ENCODE measurements at regions of chr2 and their contacts with region 1.

Region 1: DNA sequence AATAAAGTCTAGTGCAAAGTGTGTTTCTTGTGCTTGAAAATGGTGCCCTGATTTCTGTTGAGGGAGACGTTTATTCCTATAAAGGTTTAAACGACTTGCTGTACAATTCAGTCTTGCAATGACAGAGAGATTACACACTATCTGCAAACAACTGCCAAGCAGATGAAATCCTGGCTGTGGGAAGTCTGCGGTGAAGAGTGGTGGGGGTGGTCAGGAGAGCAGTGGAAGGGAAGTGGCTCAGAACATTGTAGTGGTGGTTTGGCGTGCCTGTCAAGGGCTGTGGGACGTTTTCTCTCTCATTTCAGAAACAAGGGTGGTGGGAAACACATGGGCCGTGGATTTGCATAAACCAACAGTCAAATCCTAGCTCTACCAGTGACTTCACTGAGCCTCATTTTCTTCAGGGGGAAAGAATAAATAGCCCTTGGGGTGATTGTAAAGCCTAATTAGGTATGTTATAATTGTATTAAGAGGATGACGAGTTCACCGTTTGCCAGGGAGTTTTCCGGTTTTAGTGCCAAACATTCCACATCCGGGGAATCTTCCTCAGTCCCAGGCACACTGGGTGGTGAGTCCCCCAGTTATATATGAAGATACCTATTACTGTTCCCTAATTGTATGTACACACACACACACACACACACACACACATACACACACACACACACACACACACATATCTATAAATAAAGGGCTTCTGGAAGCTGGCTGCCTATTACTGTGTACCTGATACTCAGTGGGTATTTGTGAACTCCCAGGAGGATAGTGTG is 115.0 kb downstream of the SPTBN1 start:
- DNase-seq: peak; percentile 57 to 73
- H3K4me3 ChIP-seq: no peak overlapping the region
- H3K4me3 Mint-ChIP-seq: peak overlapping the region; percentile 67
- H3K27ac Mint-ChIP-seq: peak overlapping the region; percentile 99
- H3K4me1 ChIP-seq: peaks cover 89% of the 10 kb centered on the region
- H3K4me1 Mint-ChIP-seq: peaks cover 80% of the 10 kb centered on the region
- H3K27me3 ChIP-seq: no peaks in the 10 kb centered on the region
- H3K27me3 Mint-ChIP-seq: no peaks in the 10 kb centered on the region
- CTCF ChIP-seq: no peak

Region 2: DNA sequence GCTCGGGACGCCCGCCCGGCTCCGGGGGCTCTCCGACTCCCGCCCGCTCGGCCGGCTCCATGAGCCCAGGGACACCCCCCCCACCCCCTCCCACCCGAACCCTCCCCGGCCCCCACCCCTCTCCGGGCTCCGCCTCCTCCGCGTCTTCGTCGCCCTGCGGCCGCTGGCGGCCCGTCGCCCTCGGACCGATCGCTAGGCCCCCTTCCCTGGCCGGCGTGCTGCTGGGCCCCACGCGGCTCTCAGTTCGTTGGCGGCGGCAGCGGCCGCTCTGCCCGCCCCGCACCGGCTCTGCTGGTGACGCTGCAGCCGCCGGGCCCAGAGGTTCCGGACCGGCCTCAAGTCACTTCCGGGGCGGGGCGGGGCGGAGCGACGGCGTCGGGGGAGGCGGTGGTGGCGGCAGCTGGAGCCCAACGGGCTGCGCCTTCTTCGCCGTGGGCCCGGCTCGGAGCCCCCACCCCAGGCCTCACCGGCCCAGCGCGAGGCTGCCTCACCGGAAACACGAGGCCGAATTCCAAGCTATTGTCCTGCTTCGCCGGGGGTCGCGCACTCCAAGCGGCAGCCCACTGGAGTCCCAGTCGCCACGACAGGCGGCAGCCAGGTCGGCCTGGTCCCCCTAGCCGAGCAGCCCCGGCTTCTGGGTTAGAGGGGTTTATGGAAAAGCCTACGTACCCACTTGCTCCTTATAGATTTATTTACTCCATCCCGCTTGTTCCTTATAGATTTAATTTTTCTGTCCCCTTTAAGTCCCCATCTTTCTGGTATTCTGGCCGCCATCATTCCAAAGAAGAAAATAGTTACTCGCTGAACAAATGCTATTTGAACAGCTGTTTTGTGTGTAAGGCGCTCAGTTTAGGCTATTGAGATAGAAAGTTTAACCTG is 600.1 kb before region 1 on chr2 and contains the start of gene PSME4:
- CTCF ChIA-PET with region 1: no interaction called
- POLR2A ChIA-PET with region 1: interaction called, 4 read pairs
- intact Hi-C with region 1: loop called (anchors 10 kb)
- DNase-seq: peak; percentile 95 to 97
- H3K4me3 ChIP-seq: peak within 1 kb of the TSS; percentile 80
- H3K4me3 Mint-ChIP-seq: peak within 1 kb of the TSS; percentile 91
- H3K27ac Mint-ChIP-seq: peak within 1 kb of the TSS; percentile 97
- H3K4me1 ChIP-seq: peaks cover 21% of the 10 kb centered on the region
- H3K4me1 Mint-ChIP-seq: peaks cover 42% of the 10 kb centered on the region
- H3K27me3 ChIP-seq: no peaks in the 10 kb centered on the region
- H3K27me3 Mint-ChIP-seq: no peaks in the 10 kb centered on the region
- CTCF ChIP-seq: no peak
- total RNA-seq, gene PSME4: 79.0 and 84.9 TPM in 2 replicates

Region 3: GRCh38 chr2:54522624-54523281 is 48.4 kb before region 1 on chr2:
- CTCF ChIA-PET with region 1: no interaction called
- POLR2A ChIA-PET with region 1: interaction called, 3 read pairs
- intact Hi-C with region 1: loop called (anchors 1 kb)
- DNase-seq: peak; percentile 83 to 87
- H3K4me3 ChIP-seq: no peak overlapping the region
- H3K4me3 Mint-ChIP-seq: no peak overlapping the region
- H3K27ac Mint-ChIP-seq: no peak overlapping the region
- H3K4me1 ChIP-seq: peaks cover 20% of the 10 kb centered on the region
- H3K4me1 Mint-ChIP-seq: peaks cover 42% of the 10 kb centered on the region
- H3K27me3 ChIP-seq: no peaks in the 10 kb centered on the region
- H3K27me3 Mint-ChIP-seq: no peaks in the 10 kb centered on the region
- CTCF ChIP-seq: peak; percentile 72 to 83

Region 4: GRCh38 chr2:54545702-54546450 is 25.2 kb before region 1 on chr2:
- CTCF ChIA-PET with region 1: no interaction called
- POLR2A ChIA-PET with region 1: interaction called, 3 read pairs
- intact Hi-C with region 1: loop called (anchors 1 kb)
- DNase-seq: peak; percentile 55 to 67
- H3K4me3 ChIP-seq: no peak overlapping the region
- H3K4me3 Mint-ChIP-seq: no peak overlapping the region
- H3K27ac Mint-ChIP-seq: peak overlapping the region; percentile 75
- H3K4me1 ChIP-seq: peaks cover 53% of the 10 kb centered on the region
- H3K4me1 Mint-ChIP-seq: peaks cover 19% of the 10 kb centered on the region
- H3K27me3 ChIP-seq: no peaks in the 10 kb centered on the region
- H3K27me3 Mint-ChIP-seq: no peaks in the 10 kb centered on the region
- CTCF ChIP-seq: no peak

Region 5: GRCh38 chr2:54589340-54590215 is 18.5 kb after region 1 on chr2:
- CTCF ChIA-PET with region 1: no interaction called
- POLR2A ChIA-PET with region 1: no interaction called
- intact Hi-C with region 1: loop called (anchors 1 kb)
- DNase-seq: peak in 1 of 2 experiments; percentile 42
- H3K4me3 ChIP-seq: no peak overlapping the region
- H3K4me3 Mint-ChIP-seq: no peak overlapping the region
- H3K27ac Mint-ChIP-seq: peak overlapping the region; percentile 45
- H3K4me1 ChIP-seq: peaks cover 19% of the 10 kb centered on the region
- H3K4me1 Mint-ChIP-seq: peaks cover 46% of the 10 kb centered on the region
- H3K27me3 ChIP-seq: no peaks in the 10 kb centered on the region
- H3K27me3 Mint-ChIP-seq: no peaks in the 10 kb centered on the region
- CTCF ChIP-seq: no peak

Region 6: DNA sequence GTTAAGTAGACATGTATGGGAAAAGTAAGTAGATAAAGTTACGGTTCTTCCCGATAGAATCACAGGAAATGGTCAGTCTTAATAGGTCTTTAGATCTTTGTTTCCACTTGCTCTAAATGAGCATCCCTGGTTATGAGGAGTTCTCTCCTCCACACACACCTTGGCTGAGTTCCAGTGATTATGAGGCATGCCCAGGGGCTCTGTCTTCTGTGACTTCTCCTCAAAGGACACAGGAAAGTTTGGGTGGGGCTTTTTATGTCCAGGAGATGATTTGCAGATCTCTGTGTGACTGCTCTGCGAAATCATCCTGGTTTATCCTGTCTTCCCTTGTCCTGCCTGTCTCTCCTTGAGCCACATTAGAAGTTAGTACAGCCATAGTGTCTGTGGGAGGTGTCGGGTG is 68.5 kb after region 1 on chr2:
- CTCF ChIA-PET with region 1: no interaction called
- POLR2A ChIA-PET with region 1: no interaction called
- intact Hi-C with region 1: loop called (anchors 2 kb)
- DNase-seq: no peak
- H3K4me3 ChIP-seq: no peak overlapping the region
- H3K4me3 Mint-ChIP-seq: no peak overlapping the region
- H3K27ac Mint-ChIP-seq: peak overlapping the region; percentile 76
- H3K4me1 ChIP-seq: peaks cover 16% of the 10 kb centered on the region
- H3K4me1 Mint-ChIP-seq: peaks cover 47% of the 10 kb centered on the region
- H3K27me3 ChIP-seq: no peaks in the 10 kb centered on the region
- H3K27me3 Mint-ChIP-seq: no peaks in the 10 kb centered on the region
- CTCF ChIP-seq: no peak

Region 7: DNA sequence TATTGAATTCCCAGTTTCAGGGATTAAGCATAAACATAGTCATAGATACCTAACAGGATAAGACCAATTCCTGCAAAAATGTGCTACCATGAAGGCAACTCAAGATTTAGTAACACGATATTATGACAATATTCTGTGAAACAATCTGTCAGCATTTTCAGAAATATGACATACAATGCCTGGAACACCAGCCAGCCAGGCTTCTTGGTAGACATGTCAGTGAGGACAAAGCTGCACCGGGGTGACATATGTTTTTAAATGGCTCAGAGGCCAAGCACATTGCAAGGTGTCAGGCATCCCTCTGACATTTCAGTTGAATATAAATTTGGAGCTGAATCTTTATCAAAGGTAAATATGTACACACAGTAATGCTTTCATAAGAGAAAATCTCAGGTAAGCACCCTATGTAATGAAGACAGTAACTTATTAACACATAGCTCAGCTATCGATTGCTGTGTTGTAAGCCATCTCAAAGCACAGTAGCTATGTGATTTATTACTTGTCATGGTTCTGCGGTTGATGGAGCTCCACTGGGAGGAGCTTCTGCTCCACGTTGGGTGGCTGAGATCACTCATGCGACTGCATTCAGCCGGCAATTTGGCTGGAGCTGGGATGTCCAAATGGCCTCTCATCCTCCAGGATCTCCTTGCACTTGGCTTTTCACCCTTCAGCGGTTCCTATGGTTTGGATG is 120.5 kb after region 1 on chr2:
- CTCF ChIA-PET with region 1: interaction called, 3 read pairs
- POLR2A ChIA-PET with region 1: no interaction called
- intact Hi-C with region 1: loop called (anchors 1 kb)
- DNase-seq: peak; percentile 74 to 81
- H3K4me3 ChIP-seq: no peak overlapping the region
- H3K4me3 Mint-ChIP-seq: no peak overlapping the region
- H3K27ac Mint-ChIP-seq: no peak overlapping the region
- H3K4me1 ChIP-seq: peaks cover 16% of the 10 kb centered on the region
- H3K4me1 Mint-ChIP-seq: peaks cover 9% of the 10 kb centered on the region
- H3K27me3 ChIP-seq: no peaks in the 10 kb centered on the region
- H3K27me3 Mint-ChIP-seq: no peaks in the 10 kb centered on the region
- CTCF ChIP-seq: peak in 1 of 2 experiments; percentile 7

Region 8: DNA sequence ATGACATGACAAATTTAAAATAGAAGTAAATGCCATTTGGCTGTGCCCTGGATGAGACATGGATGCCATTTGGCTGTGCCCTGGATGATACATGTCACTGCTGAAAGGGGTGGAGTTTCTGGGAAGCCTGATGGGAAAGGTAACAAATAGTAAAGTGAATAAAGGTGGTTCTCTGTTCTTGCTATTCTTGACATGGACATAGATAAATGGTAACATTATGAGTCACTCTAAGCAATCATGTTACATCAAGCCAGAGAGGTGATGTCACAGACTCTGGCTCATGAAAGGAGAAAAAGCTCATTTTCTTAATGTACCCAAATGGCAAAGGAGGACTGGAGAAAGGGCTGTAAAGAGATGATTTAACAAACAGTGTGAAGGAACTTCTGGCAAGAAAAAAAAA is 238.7 kb after region 1 on chr2:
- CTCF ChIA-PET with region 1: no interaction called
- POLR2A ChIA-PET with region 1: no interaction called
- intact Hi-C with region 1: no loop called
- DNase-seq: no peak
- H3K4me3 ChIP-seq: no peak overlapping the region
- H3K4me3 Mint-ChIP-seq: no peak overlapping the region
- H3K27ac Mint-ChIP-seq: no peak overlapping the region
- H3K4me1 ChIP-seq: no peaks in the 10 kb centered on the region
- H3K4me1 Mint-ChIP-seq: peaks cover 13% of the 10 kb centered on the region
- H3K27me3 ChIP-seq: no peaks in the 10 kb centered on the region
- H3K27me3 Mint-ChIP-seq: no peaks in the 10 kb centered on the region
- CTCF ChIP-seq: no peak

Measured in Caco-2 (cell line).